Activated CD4-positive, alpha-beta memory T cell treated with anti-CD3 and anti-CD28 coated beads for 36 hours (primary cell): ENCODE measurements at regions of chr4 and their contacts with region 1.

Region 1: DNA sequence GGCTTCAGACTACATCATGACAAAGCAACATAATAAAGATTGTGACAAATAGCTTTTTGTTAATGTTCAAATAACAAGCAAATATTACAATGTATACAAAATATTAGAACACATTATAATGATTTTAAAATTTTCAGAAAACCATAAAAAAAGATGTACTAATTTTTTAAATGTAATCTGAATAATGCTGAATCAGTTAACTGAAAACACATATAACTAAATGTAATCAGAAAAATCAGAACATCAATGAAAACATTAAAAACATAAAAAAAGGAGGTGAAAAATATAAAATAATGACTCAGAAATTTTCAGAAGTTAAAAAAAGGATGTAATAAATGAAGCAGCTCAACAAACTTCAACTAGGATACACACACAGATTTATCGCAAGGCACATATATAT is 53.5 kb downstream of the ZNF721 start:
- DNase-seq: no peak
- H3K4me3 Mint-ChIP-seq: no peak overlapping the region
- H3K27ac Mint-ChIP-seq: no peak overlapping the region
- H3K4me1 Mint-ChIP-seq: no peaks in the 10 kb centered on the region
- H3K27me3 Mint-ChIP-seq: no peaks in the 10 kb centered on the region

Region 2: GRCh38 chr4:256492-256891 is 188.9 kb before region 1 on chr4:
- CTCF ChIA-PET with region 1: no interaction called
- POLR2A ChIA-PET with region 1: no interaction called
- intact Hi-C with region 1: no loop called
- DNase-seq: no peak
- H3K4me3 Mint-ChIP-seq: no peak overlapping the region
- H3K27ac Mint-ChIP-seq: no peak overlapping the region
- H3K4me1 Mint-ChIP-seq: no peaks in the 10 kb centered on the region
- H3K27me3 Mint-ChIP-seq: no peaks in the 10 kb centered on the region

Region 3: GRCh38 chr4:288891-289290 is 156.5 kb before region 1 on chr4:
- CTCF ChIA-PET with region 1: no interaction called
- POLR2A ChIA-PET with region 1: no interaction called
- intact Hi-C with region 1: no loop called
- DNase-seq: no peak
- H3K4me3 Mint-ChIP-seq: no peak overlapping the region
- H3K27ac Mint-ChIP-seq: no peak overlapping the region
- H3K4me1 Mint-ChIP-seq: no peaks in the 10 kb centered on the region
- H3K27me3 Mint-ChIP-seq: no peaks in the 10 kb centered on the region

Region 4: GRCh38 chr4:373062-373839 is 72.2 kb before region 1 on chr4:
- CTCF ChIA-PET with region 1: no interaction called
- POLR2A ChIA-PET with region 1: no interaction called
- intact Hi-C with region 1: loop called (anchors 10 kb)
- DNase-seq: no peak
- H3K4me3 Mint-ChIP-seq: no peak overlapping the region
- H3K27ac Mint-ChIP-seq: no peak overlapping the region
- H3K4me1 Mint-ChIP-seq: no peaks in the 10 kb centered on the region
- H3K27me3 Mint-ChIP-seq: no peaks in the 10 kb centered on the region

Region 5: GRCh38 chr4:856225-856901 is 411.0 kb after region 1 on chr4:
- CTCF ChIA-PET with region 1: no interaction called
- POLR2A ChIA-PET with region 1: no interaction called
- intact Hi-C with region 1: no loop called
- DNase-seq: no peak
- H3K4me3 Mint-ChIP-seq: no peak overlapping the region
- H3K27ac Mint-ChIP-seq: peak overlapping the region; percentile 66
- H3K4me1 Mint-ChIP-seq: no peaks in the 10 kb centered on the region
- H3K27me3 Mint-ChIP-seq: no peaks in the 10 kb centered on the region